HepG2 (cell line): ENCODE measurements at regions of chr1 and their contacts with region 1.

Region 1: GRCh38 chr1:186165303-186165702 is 209.8 kb downstream of the TPR start:
- DNase-seq: no peak
- ATAC-seq: no peak
- H3K4me3 ChIP-seq: no peak overlapping the region
- H3K27ac ChIP-seq: no peak overlapping the region
- H3K4me1 ChIP-seq: peaks cover 10% of the 10 kb centered on the region
- H3K27me3 ChIP-seq: no peaks in the 10 kb centered on the region
- CTCF ChIP-seq: no peak
- EP300 ChIP-seq: no peak
- POLR2A ChIP-seq: no peak
- RAD21 ChIP-seq: no peak

Region 2: GRCh38 chr1:186139701-186140100 is 25.6 kb before region 1 on chr1:
- CTCF ChIA-PET with region 1: no interaction called
- POLR2A ChIA-PET with region 1: no interaction called
- in situ Hi-C with region 1: no loop called
- intact Hi-C with region 1: no loop called
- DNase-seq: no peak
- ATAC-seq: no peak
- H3K4me3 ChIP-seq: no peak overlapping the region
- H3K27ac ChIP-seq: no peak overlapping the region
- H3K4me1 ChIP-seq: no peaks in the 10 kb centered on the region
- H3K27me3 ChIP-seq: no peaks in the 10 kb centered on the region
- CTCF ChIP-seq: no peak
- EP300 ChIP-seq: no peak
- POLR2A ChIP-seq: no peak
- RAD21 ChIP-seq: no peak

Region 3: GRCh38 chr1:186633116-186633515 is 467.8 kb after region 1 on chr1:
- CTCF ChIA-PET with region 1: no interaction called
- POLR2A ChIA-PET with region 1: no interaction called
- in situ Hi-C with region 1: no loop called
- intact Hi-C with region 1: loop called (anchors 5 kb)
- DNase-seq: no peak
- ATAC-seq: no peak
- H3K4me3 ChIP-seq: no peak overlapping the region
- H3K27ac ChIP-seq: no peak overlapping the region
- H3K4me1 ChIP-seq: no peaks in the 10 kb centered on the region
- H3K27me3 ChIP-seq: no peaks in the 10 kb centered on the region
- CTCF ChIP-seq: no peak
- EP300 ChIP-seq: no peak
- POLR2A ChIP-seq: no peak
- RAD21 ChIP-seq: no peak